ENCODE measurements at regions of chr13 and their contacts with region 1.

Region 1: GRCh38 chr13:97221989-97222700 is at the start of gene MBNL2:
- DNase-seq: peak; percentile 91 to 99 (median 98)
- H3K4me3 ChIP-seq: peak within 1 kb of the TSS; percentile 54 to 96 (median 79)
- H3K27ac ChIP-seq: peak within 1 kb of the TSS; percentile 52 to 97 (median 92)
- H3K27me3 ChIP-seq: no peaks in the 10 kb centered on the region
- CTCF ChIP-seq: peak in 18 of 56 donors; percentile 3 to 38 (median 10)
- total RNA-seq, gene MBNL2: 96.2 to 275 (median 181) TPM

Region 2: DNA sequence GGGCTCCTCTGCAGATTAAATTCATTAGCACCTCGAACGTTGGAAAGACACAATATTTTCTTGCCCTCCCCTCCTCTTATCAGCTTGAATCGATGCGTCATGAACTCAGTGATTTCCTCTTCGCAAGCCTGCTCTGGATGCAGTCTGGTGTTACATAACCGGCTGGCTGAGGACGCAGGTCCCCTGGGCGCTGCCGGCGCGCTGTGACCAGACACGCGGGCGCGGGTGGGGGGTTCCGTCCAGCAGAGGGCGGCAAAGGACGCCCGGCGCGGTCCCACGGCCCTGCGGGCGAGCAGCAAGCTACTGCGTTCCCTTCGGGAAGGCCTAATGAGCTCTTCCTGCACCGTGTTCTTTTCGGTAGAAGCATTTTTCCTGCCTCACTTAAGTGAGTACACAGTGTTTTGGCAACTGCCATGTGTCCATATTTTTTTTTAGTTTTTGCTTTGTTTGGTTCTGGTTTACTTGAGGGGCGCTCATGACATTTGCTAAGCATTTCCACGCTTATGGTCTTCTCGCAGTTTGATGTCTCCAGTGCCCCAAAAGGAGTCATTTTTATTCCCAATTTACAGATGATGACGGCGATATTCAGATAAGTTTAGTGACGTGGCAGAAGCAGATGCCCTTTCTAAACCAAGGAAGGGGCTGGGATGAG is 112.2 kb before region 1 on chr13:
- intact Hi-C with region 1: loop called in 1 of 2 experiments (anchors 5 kb)
- DNase-seq: peak; percentile 85 to 95 (median 88)
- H3K4me3 ChIP-seq: peak overlapping the region in 58 of 59 donors; percentile 11 to 69 (median 50)
- H3K27ac ChIP-seq: peak overlapping the region in 58 of 59 donors; percentile 8 to 89 (median 75)
- H3K27me3 ChIP-seq: no peaks in the 10 kb centered on the region
- CTCF ChIP-seq: peak; percentile 95 to 100 (median 99)

Region 3: GRCh38 chr13:97242755-97243497 is 20.8 kb after region 1 on chr13:
- intact Hi-C with region 1: loop called in 1 of 2 experiments (anchors 2 kb)
- DNase-seq: peak in 9 of 10 donors; percentile 78 to 89 (median 84)
- H3K4me3 ChIP-seq: peak overlapping the region in 50 of 59 donors; percentile 0 to 59 (median 31)
- H3K27ac ChIP-seq: peak overlapping the region; percentile 42 to 99 (median 94)
- H3K27me3 ChIP-seq: no peaks in the 10 kb centered on the region
- CTCF ChIP-seq: peak in 11 of 56 donors; percentile 6 to 25 (median 11)

Region 4: DNA sequence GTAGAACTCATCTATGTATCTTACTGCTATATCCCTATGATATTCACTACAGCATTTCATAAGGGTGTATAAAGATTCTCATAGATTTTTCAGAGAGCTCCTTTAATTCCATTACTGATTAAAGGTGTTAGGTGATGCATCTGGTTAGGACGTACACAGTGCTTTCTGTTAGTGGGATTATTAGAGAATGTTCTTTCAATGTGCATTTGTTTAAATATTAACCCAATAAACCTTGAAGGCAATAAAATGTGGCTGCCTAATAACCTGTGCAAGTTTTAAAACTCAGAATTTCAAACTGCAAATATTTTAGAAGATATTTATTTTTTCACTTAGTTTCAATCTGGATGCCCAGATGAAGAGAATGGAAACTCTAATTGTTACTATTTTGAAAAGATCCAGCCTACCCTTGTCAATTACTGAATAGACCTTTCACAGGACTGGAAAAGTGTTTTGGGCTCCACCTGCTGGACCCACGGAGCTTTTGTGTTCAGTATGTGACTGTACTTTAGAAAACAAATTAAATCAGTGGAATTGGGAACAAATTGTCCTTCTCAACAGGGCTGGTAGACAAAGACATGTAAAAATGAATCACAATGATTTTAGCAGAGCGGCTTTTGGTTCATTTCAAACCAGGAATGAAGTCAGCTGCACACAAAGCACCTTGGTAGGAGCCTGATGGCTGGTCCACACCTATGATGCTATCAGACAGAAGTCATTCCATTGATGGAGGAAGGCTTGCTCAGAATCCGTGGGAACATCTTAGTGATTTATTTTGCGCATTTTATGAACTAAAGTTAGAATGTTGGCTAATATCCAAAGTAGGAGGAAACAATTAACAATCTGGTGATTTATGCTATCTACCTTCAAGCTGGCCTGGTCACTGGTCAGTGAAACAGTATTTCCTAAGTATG is 122.4 kb after region 1 on chr13:
- intact Hi-C with region 1: loop called in 1 of 2 experiments (anchors 5 kb)
- DNase-seq: peak in 9 of 10 donors; percentile 60 to 85 (median 76)
- H3K4me3 ChIP-seq: peak overlapping the region in 5 of 59 donors; percentile 1 to 30 (median 11)
- H3K27ac ChIP-seq: peak overlapping the region in 57 of 59 donors; percentile 10 to 89 (median 72)
- H3K27me3 ChIP-seq: no peaks in the 10 kb centered on the region
- CTCF ChIP-seq: peak; percentile 39 to 86 (median 74)

Region 5: DNA sequence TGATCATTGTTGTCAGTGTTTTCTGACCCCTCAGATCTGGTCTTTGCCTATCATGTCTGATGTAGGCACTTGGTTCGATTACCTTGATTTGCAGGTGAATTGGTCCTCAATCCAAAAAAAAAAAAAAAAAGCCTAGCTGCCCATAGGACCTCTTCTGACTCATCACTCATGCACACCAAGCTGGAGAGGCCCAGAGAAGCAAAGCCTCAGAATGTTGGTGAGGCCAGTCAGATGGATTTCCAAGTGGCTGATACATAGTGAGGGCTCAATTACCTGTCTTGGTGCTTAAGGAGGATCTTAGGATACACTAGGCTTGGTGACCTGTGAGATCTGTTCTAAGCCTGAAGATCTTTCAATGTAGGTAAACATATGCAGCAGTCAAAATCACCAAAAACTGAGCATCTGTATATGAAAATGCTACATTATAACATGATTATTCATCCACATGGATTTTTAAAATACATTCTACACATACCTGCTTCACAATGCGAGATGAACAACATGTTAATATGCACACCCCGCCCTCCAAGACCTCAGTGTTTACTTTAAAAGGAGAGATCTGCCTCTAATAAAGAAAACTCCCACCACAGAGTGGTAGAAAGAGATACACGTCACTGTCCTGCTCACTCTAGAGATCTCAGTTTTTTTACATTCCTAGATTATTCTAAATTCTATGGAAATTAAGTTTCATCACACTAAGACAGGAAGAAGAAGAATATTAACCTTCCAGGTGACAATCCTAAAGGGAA is 132.0 kb after region 1 on chr13:
- intact Hi-C with region 1: loop called (anchors 5 kb)
- DNase-seq: no peak
- H3K4me3 ChIP-seq: peak overlapping the region in 3 of 59 donors; percentile 12 to 37 (median 18)
- H3K27ac ChIP-seq: peak overlapping the region in 56 of 59 donors; percentile 4 to 89 (median 76)
- H3K27me3 ChIP-seq: no peaks in the 10 kb centered on the region
- CTCF ChIP-seq: no peak

Region 6: DNA sequence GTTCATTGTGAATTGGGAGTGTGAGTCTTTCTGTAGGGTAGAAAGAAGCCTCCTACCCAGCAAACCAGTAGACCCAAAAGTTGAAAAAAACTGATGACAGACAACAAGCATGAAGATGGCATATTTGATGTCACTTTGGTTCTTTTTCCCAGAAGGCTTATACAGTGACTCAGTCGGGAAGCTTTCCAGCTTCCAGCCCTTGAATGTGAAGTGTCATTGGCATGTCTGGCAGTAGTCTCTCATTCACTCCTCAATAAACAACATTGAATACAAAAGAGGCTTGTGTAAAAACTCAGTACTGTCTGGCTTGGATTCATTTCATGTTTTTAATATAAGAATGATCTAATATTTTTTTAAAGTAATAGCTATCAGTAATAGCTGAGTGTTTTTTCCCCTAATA is 800.1 kb after region 1 on chr13:
- intact Hi-C with region 1: no loop called
- DNase-seq: peak in 3 of 10 donors; percentile 45 to 73 (median 57)
- H3K4me3 ChIP-seq: no peak overlapping the region
- H3K27ac ChIP-seq: peak overlapping the region in 29 of 59 donors; percentile 2 to 77 (median 41)
- H3K27me3 ChIP-seq: no peaks in the 10 kb centered on the region
- CTCF ChIP-seq: peak in 2 of 56 donors; percentile 4 to 14

Measured in dorsolateral prefrontal cortex (tissue), 120 donors.